Testis (tissue), 5 donors: ENCODE measurements at regions of chr9 and their contacts with region 1.

Region 1: GRCh38 chr9:125397736-125398135 is 136.1 kb downstream of the GAPVD1 start:
- DNase-seq: no peak
- H3K4me3 ChIP-seq: no peak overlapping the region
- H3K27ac ChIP-seq: no peak overlapping the region
- H3K4me1 ChIP-seq: no peaks in the 10 kb centered on the region
- H3K27me3 ChIP-seq: no peaks in the 10 kb centered on the region
- CTCF ChIP-seq: no peak
- POLR2A ChIP-seq: no peak

Region 2: DNA sequence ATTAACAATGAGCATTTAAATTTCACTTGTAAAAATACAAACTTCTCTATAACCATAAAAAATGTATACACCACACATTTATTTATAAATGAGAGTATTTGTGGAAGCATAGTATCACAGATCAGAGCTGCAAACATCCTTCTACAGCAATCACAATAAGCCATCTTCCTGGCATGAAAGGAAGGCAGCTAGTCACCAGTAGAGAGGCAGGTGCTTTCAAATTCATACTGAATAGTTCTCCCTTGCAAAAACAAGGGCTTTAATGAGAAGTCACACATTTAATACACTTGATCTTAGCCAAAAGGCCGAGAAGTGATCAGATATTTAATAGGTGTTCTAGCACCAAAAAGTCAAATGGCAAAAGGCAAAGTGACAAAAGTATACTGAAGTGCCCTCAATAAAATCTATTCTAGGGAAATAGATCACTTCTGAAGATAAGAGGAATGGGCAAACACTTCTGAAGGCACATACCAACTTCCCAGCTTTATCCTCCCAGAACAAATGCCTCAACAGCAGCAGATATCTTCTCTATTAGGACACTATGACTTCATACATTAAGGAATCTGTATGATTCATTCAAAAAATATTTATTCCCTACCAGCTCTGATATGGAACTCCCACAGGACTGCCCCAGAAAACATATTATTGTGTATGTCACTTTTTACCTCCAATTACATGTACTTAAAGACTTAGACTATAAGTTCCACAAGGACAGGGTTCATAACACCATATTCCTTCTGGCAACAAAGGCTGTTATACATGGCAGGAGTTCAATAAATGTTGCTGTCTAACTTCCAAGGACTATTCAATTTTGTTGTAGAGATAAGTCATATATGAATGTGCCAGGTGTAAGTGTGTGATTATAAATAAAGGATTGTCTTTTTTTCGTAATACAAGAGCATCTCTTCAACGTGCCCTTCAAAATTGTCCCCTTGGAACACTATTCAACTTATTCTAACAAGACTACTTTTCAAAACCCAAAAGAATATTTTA is 277.5 kb after region 1 on chr9:
- intact Hi-C with region 1: no loop called
- DNase-seq: no peak
- H3K4me3 ChIP-seq: no peak overlapping the region
- H3K27ac ChIP-seq: no peak overlapping the region
- H3K4me1 ChIP-seq: no peaks in the 10 kb centered on the region
- H3K27me3 ChIP-seq: no peaks in the 10 kb centered on the region
- CTCF ChIP-seq: no peak
- POLR2A ChIP-seq: no peak

Region 3: DNA sequence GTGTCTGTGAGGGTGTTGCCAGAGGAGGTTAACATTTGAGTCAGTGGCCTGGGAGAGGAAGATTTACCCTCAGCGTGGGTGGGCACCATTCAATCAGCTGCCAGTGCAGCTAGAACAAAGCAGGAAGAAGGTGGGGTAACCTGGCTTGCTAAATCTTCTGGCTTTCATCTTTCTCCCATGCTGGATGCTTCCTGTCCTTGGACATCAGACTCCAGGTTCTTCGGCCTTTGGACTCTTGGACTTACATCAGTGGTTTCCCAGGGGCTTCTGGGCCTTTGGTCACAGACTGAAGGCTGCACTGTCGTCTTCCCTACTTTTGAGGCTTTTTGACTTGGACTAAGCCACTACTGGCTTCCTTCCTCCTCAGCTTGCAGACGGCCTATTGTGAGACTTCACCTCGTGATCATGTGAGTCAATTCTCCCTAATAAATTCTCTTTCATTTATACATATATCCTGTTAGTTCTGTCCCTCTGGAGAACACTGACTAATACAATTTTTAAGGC is 387.6 kb after region 1 on chr9:
- intact Hi-C with region 1: no loop called
- DNase-seq: no peak
- H3K4me3 ChIP-seq: no peak overlapping the region
- H3K27ac ChIP-seq: no peak overlapping the region
- H3K4me1 ChIP-seq: no peaks in the 10 kb centered on the region
- H3K27me3 ChIP-seq: no peaks in the 10 kb centered on the region
- CTCF ChIP-seq: no peak
- POLR2A ChIP-seq: no peak

Region 4: DNA sequence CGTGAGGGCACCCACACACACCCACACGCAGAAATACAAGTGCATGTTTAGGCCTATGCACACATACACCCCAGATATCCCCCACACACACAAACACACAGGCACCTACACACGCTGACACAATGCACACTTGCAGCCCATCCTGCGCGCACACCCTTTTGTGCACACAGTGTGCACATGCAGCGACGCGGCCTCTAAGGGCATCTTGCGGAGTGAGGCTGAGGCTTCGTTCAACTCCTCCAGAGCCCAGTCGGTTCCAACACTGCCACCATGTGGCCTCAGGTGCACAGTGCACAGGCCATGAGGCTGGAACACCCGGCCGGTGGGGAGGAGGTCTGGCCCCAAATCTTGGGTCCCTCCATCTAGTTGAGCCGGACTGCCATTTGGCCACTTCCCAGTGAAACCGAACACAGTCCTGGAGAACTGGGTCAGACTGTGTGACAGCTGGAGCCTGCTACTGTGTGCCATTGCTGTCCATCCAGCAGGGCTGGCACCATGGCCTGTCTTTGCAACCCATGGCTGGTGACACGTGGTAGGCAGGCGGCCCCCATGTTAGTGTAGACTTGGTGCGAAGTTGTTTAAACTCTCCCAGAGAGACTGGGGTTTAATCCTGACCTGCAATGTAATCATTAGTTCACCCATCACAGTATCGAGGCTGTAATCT is 831.2 kb after region 1 on chr9:
- intact Hi-C with region 1: loop called (anchors 5 kb)
- DNase-seq: peak; percentile 84
- H3K4me3 ChIP-seq: no peak overlapping the region
- H3K27ac ChIP-seq: no peak overlapping the region
- H3K4me1 ChIP-seq: peaks cover 3% of the 10 kb centered on the region
- H3K27me3 ChIP-seq: no peaks in the 10 kb centered on the region
- CTCF ChIP-seq: peak; percentile 82 to 90 (median 84)
- POLR2A ChIP-seq: no peak